K562 (cell line): ENCODE measurements at regions of chrX and their contacts with region 1.

Region 1: GRCh38 chrX:9464435-9465371 is at the start of gene TBL1X:
- DNase-seq: peak; percentile 84 to 92 (median 89)
- ATAC-seq: peak; percentile 73
- H3K4me3 ChIP-seq: peak within 1 kb of the TSS; percentile 68
- H3K27ac ChIP-seq: peak within 1 kb of the TSS; percentile 99
- H3K4me1 ChIP-seq: peaks cover 43 to 47% of the 10 kb centered on the region in 2 experiments
- H3K27me3 ChIP-seq: no peaks in the 10 kb centered on the region
- CTCF ChIP-seq: no peak
- EP300 ChIP-seq: no peak
- POLR2A ChIP-seq: no peak; the same call in 1 of the 2 replicates
- RAD21 ChIP-seq: no peak
- polyA plus RNA-seq, gene TBL1X: 6.0 to 6.8 TPM

Region 2: DNA sequence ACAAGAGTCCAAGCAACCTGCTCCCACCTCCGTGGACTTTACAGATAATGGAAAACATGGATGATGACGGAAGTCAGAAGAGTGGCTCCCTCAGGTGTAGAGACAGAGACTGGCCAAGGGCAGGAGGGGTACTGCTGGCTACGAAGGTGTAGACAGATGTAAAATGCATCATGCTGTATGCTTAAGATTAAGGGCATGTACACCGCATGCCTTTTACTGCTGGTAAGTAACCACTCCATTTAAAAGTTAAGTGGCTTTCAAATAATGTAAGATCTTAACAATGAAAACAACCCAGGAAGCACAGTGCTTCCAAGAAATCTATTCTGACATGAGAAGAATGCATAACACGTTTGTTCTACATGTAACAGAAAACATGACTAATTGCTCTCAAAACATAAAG is 353.9 kb before region 1 on chrX:
- CTCF ChIA-PET with region 1: no interaction called
- POLR2A ChIA-PET with region 1: no interaction called
- in situ Hi-C with region 1: no loop called
- intact Hi-C with region 1: no loop called
- DNase-seq: no peak
- ATAC-seq: no peak
- H3K4me3 ChIP-seq: no peak overlapping the region
- H3K27ac ChIP-seq: no peak overlapping the region
- H3K4me1 ChIP-seq: no peaks in the 10 kb centered on the region
- H3K27me3 ChIP-seq: no peaks in the 10 kb centered on the region
- CTCF ChIP-seq: no peak
- EP300 ChIP-seq: no peak
- POLR2A ChIP-seq: no peak
- RAD21 ChIP-seq: no peak

Region 3: DNA sequence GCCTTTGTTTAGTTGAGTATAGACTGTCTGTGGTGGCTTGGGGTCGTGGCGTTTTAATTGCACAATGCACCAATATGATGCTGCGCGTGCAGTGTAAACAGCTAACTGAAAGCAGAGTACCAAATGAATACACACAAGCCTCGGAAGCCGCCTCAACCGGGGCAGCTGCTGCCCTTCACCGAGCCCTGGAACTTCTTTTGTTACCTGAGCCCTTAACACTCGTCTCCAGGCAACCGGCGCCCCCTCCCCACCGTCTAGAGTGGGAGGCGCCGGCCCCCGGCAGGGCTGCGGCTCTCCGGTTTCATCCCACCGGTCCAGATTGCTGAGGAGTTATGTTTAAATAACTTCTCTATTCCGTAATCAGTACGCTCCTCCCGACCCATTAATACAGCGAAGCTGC is 173.1 kb before region 1 on chrX:
- CTCF ChIA-PET with region 1: no interaction called
- POLR2A ChIA-PET with region 1: no interaction called
- in situ Hi-C with region 1: no loop called
- intact Hi-C with region 1: no loop called
- DNase-seq: no peak
- ATAC-seq: no peak
- H3K4me3 ChIP-seq: no peak overlapping the region
- H3K27ac ChIP-seq: no peak overlapping the region
- H3K4me1 ChIP-seq: no peaks in the 10 kb centered on the region
- H3K27me3 ChIP-seq: peaks cover 19 to 44% of the 10 kb centered on the region in 2 experiments
- CTCF ChIP-seq: no peak
- EP300 ChIP-seq: no peak
- POLR2A ChIP-seq: no peak
- RAD21 ChIP-seq: no peak

Region 4: DNA sequence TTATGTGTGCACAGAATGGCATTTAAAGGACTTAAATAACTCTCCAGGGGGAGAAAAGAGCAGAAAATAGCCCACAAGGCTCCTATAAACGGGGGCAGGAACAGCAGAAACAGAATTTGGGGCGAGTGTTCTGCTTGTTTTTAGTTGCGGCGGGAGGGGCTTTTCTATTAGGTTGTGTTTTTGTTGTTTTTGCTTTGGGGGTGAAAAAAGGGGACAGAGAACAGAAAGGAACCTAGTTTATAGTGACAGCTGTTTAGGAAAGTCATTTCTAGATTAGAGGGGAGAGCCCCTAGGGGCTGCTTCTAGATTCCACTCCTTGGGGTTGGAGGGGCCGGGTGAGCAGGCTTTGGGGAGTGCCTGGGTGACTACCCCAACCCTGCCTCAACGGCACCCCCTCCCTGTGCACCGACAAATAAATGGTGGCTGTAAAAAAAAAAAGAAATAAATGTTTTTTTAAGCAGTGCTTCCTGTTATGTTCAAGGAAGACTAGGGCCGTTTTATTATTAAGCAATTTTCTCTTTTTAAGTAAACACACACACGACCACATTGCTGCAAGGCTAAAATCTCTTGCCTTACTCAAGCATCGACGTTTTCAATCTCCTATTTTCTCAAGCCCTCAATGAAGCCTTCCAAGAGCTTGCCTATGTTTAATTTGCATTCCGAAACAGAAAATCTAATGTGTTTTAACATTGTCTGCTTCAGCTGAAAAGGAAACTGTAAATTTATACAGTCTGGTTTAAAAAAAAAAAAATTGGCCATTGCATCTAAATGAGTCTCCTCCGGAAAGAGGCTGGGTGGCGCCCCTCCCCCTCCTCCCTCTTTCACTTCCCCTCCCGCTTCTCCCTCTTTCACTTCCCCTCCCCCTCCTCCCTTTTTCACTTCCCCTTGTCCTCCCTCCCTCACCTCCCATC is 123.2 kb before region 1 on chrX:
- CTCF ChIA-PET with region 1: no interaction called
- POLR2A ChIA-PET with region 1: interaction called, 5 read pairs
- in situ Hi-C with region 1: no loop called
- intact Hi-C with region 1: loop called (anchors 1 kb)
- DNase-seq: peak; percentile 57 to 72 (median 60)
- ATAC-seq: peak; percentile 38
- H3K4me3 ChIP-seq: no peak overlapping the region
- H3K27ac ChIP-seq: peak overlapping the region; percentile 79
- H3K4me1 ChIP-seq: peaks cover 11 to 26% of the 10 kb centered on the region in 2 experiments
- H3K27me3 ChIP-seq: no peaks in the 10 kb centered on the region
- CTCF ChIP-seq: no peak
- EP300 ChIP-seq: no peak
- POLR2A ChIP-seq: no peak
- RAD21 ChIP-seq: no peak

Region 5: GRCh38 chrX:9416632-9417319 is 47.9 kb before region 1 on chrX:
- CTCF ChIA-PET with region 1: no interaction called
- POLR2A ChIA-PET with region 1: no interaction called
- in situ Hi-C with region 1: no loop called
- intact Hi-C with region 1: loop called (anchors 5 kb)
- DNase-seq: no peak
- ATAC-seq: no peak
- H3K4me3 ChIP-seq: no peak overlapping the region
- H3K27ac ChIP-seq: no peak overlapping the region
- H3K4me1 ChIP-seq: peaks cover 6 to 9% of the 10 kb centered on the region in 2 experiments; a peak in 2 of 5 replicates
- H3K27me3 ChIP-seq: no peaks in the 10 kb centered on the region
- CTCF ChIP-seq: no peak
- EP300 ChIP-seq: no peak
- POLR2A ChIP-seq: no peak
- RAD21 ChIP-seq: no peak

Region 6: DNA sequence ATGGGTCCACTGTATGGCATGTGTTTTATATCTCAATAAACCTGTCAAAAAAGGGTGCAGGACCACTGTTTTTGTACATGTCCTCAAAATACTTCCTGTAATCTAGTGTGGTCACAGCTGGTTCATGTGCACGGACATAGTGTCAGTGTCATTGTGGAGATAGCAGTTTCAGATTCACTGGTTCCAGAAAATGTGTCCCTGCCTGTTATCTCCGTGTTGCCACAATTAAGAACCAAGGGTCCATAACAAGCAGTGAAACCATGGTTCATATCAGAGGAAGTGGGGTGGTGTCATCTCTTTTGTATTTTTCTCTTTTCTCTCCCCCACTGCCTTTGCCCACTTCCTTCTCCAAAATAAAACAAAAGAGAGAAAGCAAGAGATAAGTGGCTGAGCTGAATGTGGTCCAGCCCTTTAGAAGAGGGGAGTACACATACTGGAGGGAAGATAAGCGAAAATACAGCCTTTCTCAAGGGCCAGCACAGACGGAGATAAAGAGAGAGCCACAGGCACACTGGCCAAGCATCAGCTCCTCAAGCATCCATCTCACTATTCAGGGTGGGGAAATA is 51.4 kb after region 1 on chrX:
- CTCF ChIA-PET with region 1: no interaction called
- POLR2A ChIA-PET with region 1: no interaction called
- in situ Hi-C with region 1: no loop called
- intact Hi-C with region 1: loop called (anchors 1 kb)
- DNase-seq: peak; percentile 47 to 88 (median 63)
- ATAC-seq: peak; percentile 93
- H3K4me3 ChIP-seq: no peak overlapping the region
- H3K27ac ChIP-seq: peak overlapping the region; percentile 64
- H3K4me1 ChIP-seq: peaks cover 21 to 59% of the 10 kb centered on the region in 2 experiments; a peak in 4 of 5 replicates
- H3K27me3 ChIP-seq: no peaks in the 10 kb centered on the region
- CTCF ChIP-seq: no peak
- EP300 ChIP-seq: peak; percentile 80; the same call in 1 of the 2 replicates
- POLR2A ChIP-seq: no peak
- RAD21 ChIP-seq: no peak

Region 7: DNA sequence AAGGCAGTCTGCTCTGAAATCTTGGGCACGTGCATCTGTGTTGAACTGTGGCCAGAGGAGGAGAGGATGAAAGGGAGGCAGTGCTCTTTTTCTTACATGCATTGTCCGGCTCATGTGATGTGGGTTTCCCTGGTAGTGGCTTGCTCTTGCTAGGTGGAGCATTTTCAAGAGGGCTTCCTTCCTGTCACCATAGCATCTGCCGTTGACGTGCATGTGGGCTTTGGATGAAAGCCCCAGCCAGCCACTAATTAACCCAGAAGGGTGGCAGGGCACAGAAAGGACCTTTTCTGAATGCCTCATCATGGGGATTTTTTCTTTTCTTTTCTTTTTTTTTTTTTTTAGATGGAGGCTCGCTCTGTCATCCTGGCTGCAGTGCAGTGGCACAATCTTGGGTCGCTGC is 179.6 kb after region 1 on chrX:
- CTCF ChIA-PET with region 1: no interaction called
- POLR2A ChIA-PET with region 1: no interaction called
- in situ Hi-C with region 1: no loop called
- intact Hi-C with region 1: loop called (anchors 10 kb)
- DNase-seq: no peak
- ATAC-seq: no peak
- H3K4me3 ChIP-seq: no peak overlapping the region
- H3K27ac ChIP-seq: no peak overlapping the region
- H3K4me1 ChIP-seq: peaks cover 3 to 6% of the 10 kb centered on the region in 2 experiments; a peak in 2 of 5 replicates
- H3K27me3 ChIP-seq: no peaks in the 10 kb centered on the region
- CTCF ChIP-seq: no peak
- EP300 ChIP-seq: no peak
- POLR2A ChIP-seq: no peak
- RAD21 ChIP-seq: no peak

Region 8: GRCh38 chrX:9708904-9709553 is 244.3 kb after region 1 on chrX:
- CTCF ChIA-PET with region 1: no interaction called
- POLR2A ChIA-PET with region 1: no interaction called
- in situ Hi-C with region 1: no loop called
- intact Hi-C with region 1: loop called (anchors 5 kb)
- DNase-seq: peak; percentile 63 to 80 (median 66)
- ATAC-seq: peak; percentile 97
- H3K4me3 ChIP-seq: no peak overlapping the region
- H3K27ac ChIP-seq: no peak overlapping the region
- H3K4me1 ChIP-seq: no peaks in the 10 kb centered on the region
- H3K27me3 ChIP-seq: no peaks in the 10 kb centered on the region
- CTCF ChIP-seq: peak; percentile 68 to 79 (median 73)
- EP300 ChIP-seq: no peak
- POLR2A ChIP-seq: no peak
- RAD21 ChIP-seq: peak; percentile 70 to 76

Region 9: GRCh38 chrX:10512258-10512657 is 1047.6 kb after region 1 on chrX:
- CTCF ChIA-PET with region 1: no interaction called
- POLR2A ChIA-PET with region 1: no interaction called
- in situ Hi-C with region 1: no loop called
- intact Hi-C with region 1: no loop called
- DNase-seq: no peak
- ATAC-seq: no peak
- H3K4me3 ChIP-seq: no peak overlapping the region
- H3K27ac ChIP-seq: no peak overlapping the region
- H3K4me1 ChIP-seq: no peaks in the 10 kb centered on the region
- H3K27me3 ChIP-seq: 0 out of 5 replicates have a peak, but pooled peaks cover 0 to 3% of the 10 kb centered on the region in 2 experiments
- CTCF ChIP-seq: no peak
- EP300 ChIP-seq: no peak
- POLR2A ChIP-seq: no peak
- RAD21 ChIP-seq: no peak